ENCODE measurements at regions of chrX and their contacts with region 1.

Region 1: GRCh38 chrX:149453030-149453429 is 52.1 kb downstream of the IDS start:
- DNase-seq: peak; percentile 8
- ATAC-seq: peak; percentile 84
- H3K4me3 ChIP-seq: no peak overlapping the region
- H3K27ac ChIP-seq: no peak overlapping the region
- H3K4me1 ChIP-seq: peaks cover 0 to 8% of the 10 kb centered on the region in 2 experiments; a peak in 2 of 4 replicates
- H3K27me3 ChIP-seq: no peaks in the 10 kb centered on the region
- CTCF ChIP-seq: no peak
- POLR2A ChIP-seq: no peak
- RAD21 ChIP-seq: no peak

Region 2: DNA sequence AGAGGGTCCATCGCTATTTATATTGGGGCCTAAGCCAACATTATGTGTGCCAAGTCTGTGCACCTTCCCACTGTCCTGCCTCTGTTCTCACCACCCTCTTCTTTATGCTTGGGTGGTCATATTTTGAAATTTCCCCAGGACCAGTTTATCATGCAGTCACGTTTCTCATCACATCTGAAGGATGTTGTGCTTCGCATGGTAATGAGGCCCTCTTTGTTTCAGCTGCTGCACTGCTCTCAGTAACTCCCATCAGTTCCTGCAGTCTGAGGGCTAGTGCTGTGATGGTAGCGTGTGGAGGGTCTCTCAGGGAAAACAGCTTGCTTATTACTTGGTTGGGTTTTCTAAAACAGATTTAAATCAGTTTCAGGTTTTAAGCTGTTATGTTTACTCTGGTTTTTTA is 664.6 kb before region 1 on chrX:
- CTCF ChIA-PET with region 1: no interaction called
- POLR2A ChIA-PET with region 1: no interaction called
- RAD21 ChIA-PET with region 1: no interaction called
- intact Hi-C with region 1: no loop called
- DNase-seq: no peak
- ATAC-seq: no peak
- H3K4me3 ChIP-seq: no peak overlapping the region
- H3K27ac ChIP-seq: no peak overlapping the region
- H3K4me1 ChIP-seq: no peaks in the 10 kb centered on the region
- H3K27me3 ChIP-seq: no peaks in the 10 kb centered on the region
- CTCF ChIP-seq: no peak
- POLR2A ChIP-seq: no peak
- RAD21 ChIP-seq: no peak

Region 3: GRCh38 chrX:149433051-149433450 is 20.0 kb before region 1 on chrX:
- CTCF ChIA-PET with region 1: no interaction called
- POLR2A ChIA-PET with region 1: no interaction called
- RAD21 ChIA-PET with region 1: no interaction called
- intact Hi-C with region 1: loop called (anchors 1 kb)
- DNase-seq: no peak
- ATAC-seq: no peak
- H3K4me3 ChIP-seq: no peak overlapping the region
- H3K27ac ChIP-seq: no peak overlapping the region
- H3K4me1 ChIP-seq: no peaks in the 10 kb centered on the region
- H3K27me3 ChIP-seq: no peaks in the 10 kb centered on the region
- CTCF ChIP-seq: 0 out of 6 replicates have a peak, but pooled peaks of 2 of the 3 experiments have one; percentile 7 to 11
- POLR2A ChIP-seq: no peak
- RAD21 ChIP-seq: no peak